ENCODE measurements at regions of chr13 and their contacts with region 1.

Region 1: GRCh38 chr13:50531917-50532899 is 311.3 kb downstream of the DLEU7 start:
- DNase-seq: no peak
- ATAC-seq: peak in 1 of 2 donors; percentile 46
- H3K4me3 ChIP-seq: no peak overlapping the region
- H3K27ac ChIP-seq: no peak overlapping the region
- H3K4me1 ChIP-seq: peaks cover 31% of the 10 kb centered on the region
- H3K27me3 ChIP-seq: no peaks in the 10 kb centered on the region
- CTCF ChIP-seq: peak; percentile 59

Region 2: GRCh38 chr13:50081679-50082425 is 450.4 kb before region 1 on chr13:
- intact Hi-C with region 1: loop called (anchors 10 kb)
- DNase-seq: peak; percentile 97
- ATAC-seq: peak; percentile 94 to 96
- H3K4me3 ChIP-seq: peak overlapping the region; percentile 73
- H3K27ac ChIP-seq: peak overlapping the region; percentile 73
- H3K4me1 ChIP-seq: peaks cover 54% of the 10 kb centered on the region
- H3K27me3 ChIP-seq: no peaks in the 10 kb centered on the region
- CTCF ChIP-seq: no peak